ENCODE measurements at regions of chr7 and their contacts with region 1.

Region 1: DNA sequence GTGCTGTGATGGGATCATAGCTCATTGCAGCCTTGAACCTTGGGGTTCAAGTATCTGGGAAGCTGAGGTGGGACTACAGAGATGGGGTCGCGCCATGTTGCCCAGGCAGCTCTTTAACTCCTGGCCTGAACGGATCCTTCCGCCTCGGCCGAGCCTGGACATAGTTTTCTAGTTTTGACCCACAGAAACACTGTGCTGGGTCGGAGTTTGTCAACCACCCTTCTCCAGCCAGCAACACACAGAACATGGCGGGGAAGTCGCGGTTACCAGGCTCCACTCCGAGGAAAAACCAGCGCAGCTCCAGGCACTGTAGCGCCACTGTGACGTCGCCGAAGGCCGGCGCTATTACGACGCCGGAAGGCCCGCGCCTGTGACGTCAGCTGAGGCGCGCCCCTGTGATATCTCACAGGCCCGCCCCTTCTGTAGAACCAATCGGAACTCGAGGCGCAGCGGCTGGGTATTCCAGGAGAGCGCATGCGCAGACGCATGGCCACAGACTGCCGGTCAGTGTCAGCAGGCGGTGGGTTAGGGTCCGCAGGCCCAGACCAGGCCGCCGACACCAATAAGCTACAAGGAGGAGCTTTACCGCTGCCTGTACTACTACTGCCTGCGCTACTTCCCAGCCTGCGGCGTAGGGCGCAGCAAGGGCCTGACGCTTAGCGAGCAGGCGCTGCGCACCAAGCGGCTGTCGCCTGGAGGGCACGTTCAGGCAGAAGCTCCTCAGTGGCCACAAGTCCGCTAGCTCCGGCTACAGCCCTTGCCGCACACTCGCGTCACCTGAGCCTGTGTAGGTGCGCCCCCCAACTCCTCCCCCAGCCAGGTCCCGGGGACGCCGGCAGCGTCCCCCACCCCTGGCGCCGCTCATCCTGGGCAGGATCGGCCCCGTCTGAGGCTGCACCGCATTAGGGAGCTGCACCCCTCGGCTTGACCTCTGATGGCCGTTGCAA is 135.2 kb upstream of the KCTD7 start:
- DNase-seq: peak; percentile 89 to 98
- H3K4me3 ChIP-seq: peak overlapping the region; percentile 82
- H3K27ac ChIP-seq: peak overlapping the region; percentile 57
- H3K4me1 ChIP-seq: peaks cover 5% of the 10 kb centered on the region; the same call in 1 of the 2 replicates
- H3K27me3 ChIP-seq: no peaks in the 10 kb centered on the region
- CTCF ChIP-seq: no peak

Region 2: DNA sequence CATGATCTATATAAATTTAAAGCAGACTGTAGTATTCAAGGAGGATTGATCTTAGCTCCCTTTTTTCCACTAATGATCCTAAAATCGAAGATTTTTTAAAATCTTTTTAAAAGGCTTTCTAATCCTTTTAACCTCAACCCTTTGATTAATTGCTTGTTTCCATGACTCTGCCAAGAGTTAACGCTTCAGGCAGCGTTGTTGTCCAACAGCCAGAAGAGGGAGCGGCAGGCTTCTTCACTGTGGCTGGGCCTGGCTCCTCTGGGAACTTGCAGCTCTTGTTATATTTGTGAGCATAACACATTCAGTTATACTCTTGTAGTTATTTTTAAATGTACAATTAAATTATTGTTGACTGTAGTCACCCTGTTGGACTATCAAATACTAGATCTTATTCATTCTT is 352.6 kb before region 1 on chr7:
- CTCF ChIA-PET with region 1: no interaction called
- POLR2A ChIA-PET with region 1: no interaction called
- intact Hi-C with region 1: loop called (anchors 10 kb)
- DNase-seq: peak in 1 of 2 experiments; percentile 15
- H3K4me3 ChIP-seq: no peak overlapping the region
- H3K27ac ChIP-seq: no peak overlapping the region
- H3K4me1 ChIP-seq: peaks cover 16% of the 10 kb centered on the region
- H3K27me3 ChIP-seq: no peaks in the 10 kb centered on the region
- CTCF ChIP-seq: no peak; the same call in 1 of the 2 replicates

Region 3: DNA sequence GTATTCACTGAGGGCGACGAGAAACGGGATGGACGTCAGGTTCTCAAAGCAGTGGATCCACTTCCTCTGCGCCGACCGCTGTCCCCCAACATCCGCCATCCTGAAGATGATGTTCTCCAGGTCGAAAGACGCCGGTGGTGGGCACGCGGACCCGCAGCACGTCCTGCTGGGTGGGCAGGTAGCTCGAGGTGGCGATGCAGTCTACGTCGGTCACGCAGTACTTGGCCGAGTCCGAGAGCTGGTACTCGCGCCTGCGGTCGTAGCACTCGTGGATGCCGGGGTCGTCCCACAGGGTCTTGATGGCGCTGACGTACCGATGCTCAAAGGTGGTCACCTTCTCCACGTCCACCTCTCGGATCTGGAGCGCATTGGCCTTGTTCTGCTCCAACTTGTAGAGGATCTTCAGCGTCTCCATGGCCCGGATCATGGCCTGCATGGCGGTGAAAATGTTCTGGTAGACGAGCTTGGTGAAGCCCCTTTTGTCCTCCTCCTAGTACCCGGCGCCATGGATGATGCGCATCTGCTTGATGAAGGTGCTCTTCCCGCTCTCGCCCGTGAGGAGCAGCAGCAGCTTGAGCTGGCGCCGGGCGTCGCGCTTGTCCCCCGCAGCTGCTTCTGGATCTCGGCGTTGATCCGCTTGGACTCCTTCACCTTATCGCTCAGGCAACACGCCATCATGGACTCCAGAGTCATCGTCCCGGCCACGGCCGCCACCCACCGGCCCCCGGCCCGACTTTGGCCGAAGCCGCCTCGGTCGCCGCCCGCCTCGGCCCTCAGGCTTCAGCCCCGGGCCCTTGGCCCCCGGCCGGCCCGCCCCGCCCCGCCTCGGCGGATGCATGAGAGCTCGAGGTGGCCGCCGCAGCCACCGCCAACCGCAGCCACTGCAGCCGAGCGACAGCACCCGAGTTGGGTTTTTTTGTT is 12.3 kb after region 1 on chr7:
- CTCF ChIA-PET with region 1: no interaction called
- POLR2A ChIA-PET with region 1: no interaction called
- intact Hi-C with region 1: no loop called
- DNase-seq: peak in 1 of 2 experiments; percentile 28
- H3K4me3 ChIP-seq: no peak overlapping the region
- H3K27ac ChIP-seq: no peak overlapping the region
- H3K4me1 ChIP-seq: no peaks in the 10 kb centered on the region
- H3K27me3 ChIP-seq: no peaks in the 10 kb centered on the region
- CTCF ChIP-seq: no peak

Region 4: GRCh38 chr7:66697449-66698438 is 204.2 kb after region 1 on chr7:
- CTCF ChIA-PET with region 1: no interaction called
- POLR2A ChIA-PET with region 1: no interaction called
- intact Hi-C with region 1: no loop called
- DNase-seq: no peak
- H3K4me3 ChIP-seq: no peak overlapping the region
- H3K27ac ChIP-seq: no peak overlapping the region
- H3K4me1 ChIP-seq: no peaks in the 10 kb centered on the region
- H3K27me3 ChIP-seq: no peaks in the 10 kb centered on the region
- CTCF ChIP-seq: no peak